GM12878 (cell line): ENCODE measurements at regions of chr11 and their contacts with region 1.

Region 1: GRCh38 chr11:18321980-18322711 is at the starts of genes GTF2H1 and HPS5:
- DNase-seq: peak; percentile 96
- ATAC-seq: peak; percentile 84
- H3K4me3 ChIP-seq: peak within 1 kb of the TSS; percentile 95
- H3K27ac ChIP-seq: peak within 1 kb of the TSS; percentile 100
- H3K4me1 ChIP-seq: 0 out of 2 replicates have a peak, but pooled peaks cover 2% of the 10 kb centered on the region
- H3K27me3 ChIP-seq: no peaks in the 10 kb centered on the region
- CTCF ChIP-seq: no peak
- EP300 ChIP-seq: no peak; a peak in 3 of 4 replicates
- POLR2A ChIP-seq: peak; percentile 90
- RAD21 ChIP-seq: no peak
- polyA plus RNA-seq, gene GTF2H1: 39.2 to 42.9 TPM
- polyA plus RNA-seq, gene HPS5: 11.9 to 19.9 TPM

Region 2: GRCh38 chr11:18225913-18226312 is 96.2 kb before region 1 on chr11:
- CTCF ChIA-PET with region 1: no interaction called
- POLR2A ChIA-PET with region 1: no interaction called
- RAD21 ChIA-PET with region 1: no interaction called
- SMC1A ChIA-PET with region 1: no interaction called
- in situ Hi-C with region 1: no loop called
- intact Hi-C with region 1: no loop called
- DNase-seq: no peak
- ATAC-seq: no peak
- H3K4me3 ChIP-seq: no peak overlapping the region
- H3K27ac ChIP-seq: no peak overlapping the region
- H3K4me1 ChIP-seq: peaks cover 8% of the 10 kb centered on the region
- H3K27me3 ChIP-seq: no peaks in the 10 kb centered on the region
- CTCF ChIP-seq: no peak
- EP300 ChIP-seq: no peak
- POLR2A ChIP-seq: no peak
- RAD21 ChIP-seq: no peak

Region 3: DNA sequence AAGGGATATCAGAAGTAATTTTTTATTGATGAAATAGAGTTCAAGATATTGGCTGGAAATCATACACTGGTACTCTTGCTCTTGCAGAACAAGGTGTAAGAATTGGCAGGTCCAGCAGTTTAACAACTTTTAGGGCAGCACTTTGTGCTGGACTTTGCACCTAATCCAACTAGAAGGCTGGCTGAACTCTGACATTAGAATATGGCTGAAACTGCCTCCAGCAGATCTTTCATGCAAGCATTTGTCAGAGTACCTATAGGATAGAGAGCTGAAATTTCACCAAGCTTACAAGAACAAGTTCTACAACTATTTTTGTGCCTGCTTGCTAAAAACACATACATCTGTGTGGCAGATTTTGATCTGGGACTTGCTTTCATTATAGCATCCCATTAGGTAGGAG is 17.4 kb before region 1 on chr11:
- CTCF ChIA-PET with region 1: interaction called, 3 read pairs
- POLR2A ChIA-PET with region 1: no interaction called
- RAD21 ChIA-PET with region 1: interaction called, 4 read pairs
- SMC1A ChIA-PET with region 1: interaction called, 29 read pairs
- in situ Hi-C with region 1: no loop called
- intact Hi-C with region 1: no loop called
- DNase-seq: no peak
- ATAC-seq: no peak
- H3K4me3 ChIP-seq: no peak overlapping the region
- H3K27ac ChIP-seq: no peak overlapping the region
- H3K4me1 ChIP-seq: no peaks in the 10 kb centered on the region
- H3K27me3 ChIP-seq: no peaks in the 10 kb centered on the region
- CTCF ChIP-seq: no peak
- EP300 ChIP-seq: no peak
- POLR2A ChIP-seq: no peak
- RAD21 ChIP-seq: no peak

Region 4: DNA sequence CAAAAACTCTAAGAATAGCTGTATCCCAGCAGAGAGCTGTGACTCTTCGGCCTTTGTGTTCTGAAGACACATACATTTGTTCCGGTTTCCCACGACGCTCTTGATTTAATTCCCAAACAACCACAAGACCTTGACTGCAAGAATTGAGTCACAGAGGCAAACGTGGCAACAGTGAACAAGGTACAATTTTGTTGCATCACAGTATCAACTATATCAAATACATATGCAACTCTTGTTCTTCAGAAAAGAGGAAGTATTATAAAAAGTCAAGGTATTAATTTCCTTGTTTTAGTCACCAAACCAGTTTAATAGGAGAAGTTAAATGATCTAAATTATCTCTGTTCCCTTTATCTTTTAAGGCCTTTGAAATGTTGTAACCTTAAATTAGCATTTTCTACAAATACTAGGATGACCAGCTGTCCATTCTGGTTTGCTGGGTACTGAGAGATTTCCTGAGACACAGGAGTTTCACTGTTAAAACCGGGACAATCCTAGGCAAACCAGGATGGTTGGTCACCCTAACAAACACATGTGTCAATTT is 11.3 kb before region 1 on chr11:
- CTCF ChIA-PET with region 1: interaction called, 8 read pairs
- POLR2A ChIA-PET with region 1: interaction called, 13 read pairs
- RAD21 ChIA-PET with region 1: interaction called, 4 read pairs
- SMC1A ChIA-PET with region 1: interaction called, 29 read pairs
- in situ Hi-C with region 1: no loop called
- intact Hi-C with region 1: no loop called
- DNase-seq: peak; percentile 70
- ATAC-seq: peak; percentile 84
- H3K4me3 ChIP-seq: no peak overlapping the region
- H3K27ac ChIP-seq: peak overlapping the region; percentile 47
- H3K4me1 ChIP-seq: peaks cover 22% of the 10 kb centered on the region
- H3K27me3 ChIP-seq: no peaks in the 10 kb centered on the region
- CTCF ChIP-seq: no peak
- EP300 ChIP-seq: peak in 1 of 2 experiments; percentile 7; a peak in 1 of 4 replicates
- POLR2A ChIP-seq: no peak
- RAD21 ChIP-seq: no peak

Region 5: DNA sequence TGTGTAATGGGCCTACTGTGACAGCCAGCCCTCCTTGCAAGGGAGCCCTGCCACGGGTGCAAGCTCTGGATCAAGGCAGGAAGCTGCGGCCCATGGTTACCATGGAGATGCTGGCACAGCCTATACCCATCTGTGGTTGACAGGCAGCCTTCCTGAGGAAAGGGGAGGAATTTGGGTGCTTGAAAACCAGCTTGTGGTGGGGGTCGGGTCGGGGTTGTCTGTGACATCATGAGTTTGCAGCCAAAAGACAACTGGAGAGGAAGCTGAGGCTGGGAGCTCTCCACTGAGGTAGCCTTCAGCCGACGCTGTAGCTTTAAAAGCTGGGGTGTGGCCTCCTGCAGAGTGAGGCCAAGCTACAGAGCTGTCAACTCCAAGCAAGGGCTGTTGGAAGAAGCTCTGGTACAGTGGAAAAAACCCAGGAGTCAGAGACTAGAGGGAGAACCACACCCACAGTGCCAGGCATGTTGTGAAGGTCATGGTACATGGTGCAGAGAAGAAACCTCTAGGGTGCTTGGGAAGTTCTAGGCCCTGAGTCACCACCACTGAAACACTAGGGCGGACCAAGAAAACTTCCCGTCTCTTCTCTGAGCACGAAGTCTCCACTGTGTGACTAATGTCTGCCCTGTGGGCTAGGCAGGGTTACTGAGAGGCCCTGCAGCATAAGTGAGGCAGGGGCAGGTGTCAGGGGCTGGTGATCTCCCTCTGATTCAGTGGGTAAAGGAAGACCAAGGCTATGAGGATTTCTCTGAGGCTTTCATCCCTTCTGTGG is 61.4 kb after region 1 on chr11:
- CTCF ChIA-PET with region 1: interaction called, 14 read pairs
- POLR2A ChIA-PET with region 1: interaction called, 6 read pairs
- RAD21 ChIA-PET with region 1: interaction called, 16 read pairs
- SMC1A ChIA-PET with region 1: interaction called, 21 read pairs
- in situ Hi-C with region 1: no loop called
- intact Hi-C with region 1: no loop called
- DNase-seq: peak; percentile 70
- ATAC-seq: peak; percentile 93
- H3K4me3 ChIP-seq: 0 out of 2 replicates have a peak overlapping the region, but pooled peaks have one; percentile 22
- H3K27ac ChIP-seq: peak overlapping the region; percentile 98
- H3K4me1 ChIP-seq: peaks cover 22% of the 10 kb centered on the region
- H3K27me3 ChIP-seq: no peaks in the 10 kb centered on the region
- CTCF ChIP-seq: no peak
- EP300 ChIP-seq: no peak; a peak in 1 of 4 replicates
- POLR2A ChIP-seq: peak; percentile 71; the same call in 1 of the 2 replicates
- RAD21 ChIP-seq: no peak

Region 6: GRCh38 chr11:18395735-18396504 is 73.8 kb after region 1 on chr11:
- CTCF ChIA-PET with region 1: interaction called, 7 read pairs
- POLR2A ChIA-PET with region 1: interaction called, 59 read pairs
- RAD21 ChIA-PET with region 1: interaction called, 29 read pairs
- SMC1A ChIA-PET with region 1: interaction called, 37 read pairs
- in situ Hi-C with region 1: no loop called
- intact Hi-C with region 1: loop called (anchors 1 kb)
- DNase-seq: peak; percentile 86
- ATAC-seq: peak; percentile 85
- H3K4me3 ChIP-seq: peak overlapping the region; percentile 97
- H3K27ac ChIP-seq: peak overlapping the region; percentile 95
- H3K4me1 ChIP-seq: peaks cover 15% of the 10 kb centered on the region
- H3K27me3 ChIP-seq: no peaks in the 10 kb centered on the region
- CTCF ChIP-seq: no peak
- EP300 ChIP-seq: no peak
- POLR2A ChIP-seq: peak; percentile 83
- RAD21 ChIP-seq: no peak

Region 7: GRCh38 chr11:18479063-18479462 is 156.9 kb after region 1 on chr11:
- CTCF ChIA-PET with region 1: no interaction called
- POLR2A ChIA-PET with region 1: no interaction called
- RAD21 ChIA-PET with region 1: no interaction called
- SMC1A ChIA-PET with region 1: no interaction called
- in situ Hi-C with region 1: no loop called
- intact Hi-C with region 1: no loop called
- DNase-seq: no peak
- ATAC-seq: no peak
- H3K4me3 ChIP-seq: no peak overlapping the region
- H3K27ac ChIP-seq: no peak overlapping the region
- H3K4me1 ChIP-seq: no peaks in the 10 kb centered on the region
- H3K27me3 ChIP-seq: no peaks in the 10 kb centered on the region
- CTCF ChIP-seq: no peak
- EP300 ChIP-seq: no peak
- POLR2A ChIP-seq: no peak
- RAD21 ChIP-seq: no peak

Region 8: DNA sequence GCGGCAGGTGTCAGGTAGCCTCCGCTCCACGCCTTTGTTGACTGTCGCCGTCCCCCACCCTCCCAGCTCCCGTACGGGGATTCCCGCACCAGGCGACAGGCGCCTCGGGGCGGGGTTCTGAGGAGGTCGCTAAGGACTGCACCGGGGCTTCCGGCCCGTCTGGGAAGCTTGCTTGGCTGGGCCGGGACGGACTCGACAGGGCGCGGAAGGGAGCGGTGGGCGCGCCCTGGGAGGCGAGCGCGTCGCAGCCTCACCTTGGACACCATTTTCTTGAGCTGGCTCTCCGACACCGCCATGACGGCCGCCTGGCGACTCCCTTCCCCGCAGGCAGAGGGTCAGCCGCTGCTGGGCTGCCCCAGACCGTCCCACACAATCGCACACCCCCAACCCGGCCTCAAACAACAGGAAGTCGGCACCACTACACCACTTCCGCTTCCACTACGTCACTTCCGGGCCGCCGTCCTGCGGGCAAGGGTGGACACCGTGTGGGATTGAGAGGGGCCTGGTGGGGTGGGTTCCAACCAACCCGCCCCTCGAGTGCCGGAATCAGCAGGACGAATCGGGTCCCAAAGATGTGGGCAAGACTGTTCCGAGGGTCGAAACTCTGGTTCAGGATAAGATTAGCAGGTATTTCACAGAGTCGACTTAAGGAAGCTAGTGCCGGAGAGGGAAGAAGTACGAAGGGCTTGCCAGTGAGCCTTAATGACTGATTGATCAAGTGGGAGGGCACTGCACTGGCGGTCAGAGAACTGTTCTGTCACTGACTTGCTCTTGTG is 204.6 kb after region 1 on chr11 and contains the start of gene TSG101:
- CTCF ChIA-PET with region 1: no interaction called
- POLR2A ChIA-PET with region 1: interaction called, 8 read pairs
- RAD21 ChIA-PET with region 1: interaction called, 3 read pairs
- SMC1A ChIA-PET with region 1: interaction called, 3 read pairs
- in situ Hi-C with region 1: no loop called
- intact Hi-C with region 1: loop called (anchors 5 kb)
- DNase-seq: peak; percentile 69
- ATAC-seq: peak; percentile 91
- H3K4me3 ChIP-seq: peak within 1 kb of the TSS; percentile 95
- H3K27ac ChIP-seq: peak within 1 kb of the TSS; percentile 91
- H3K4me1 ChIP-seq: no peaks in the 10 kb centered on the region; the same call in 1 of the 2 replicates
- H3K27me3 ChIP-seq: no peaks in the 10 kb centered on the region
- CTCF ChIP-seq: no peak
- EP300 ChIP-seq: peak in 1 of 2 experiments; percentile 15; a peak in 1 of 4 replicates
- POLR2A ChIP-seq: peak; percentile 98
- RAD21 ChIP-seq: no peak
- polyA plus RNA-seq, gene TSG101: 22.3 to 37.6 TPM